ENCODE measurements at regions of chr19 and their contacts with region 1.

Region 1: DNA sequence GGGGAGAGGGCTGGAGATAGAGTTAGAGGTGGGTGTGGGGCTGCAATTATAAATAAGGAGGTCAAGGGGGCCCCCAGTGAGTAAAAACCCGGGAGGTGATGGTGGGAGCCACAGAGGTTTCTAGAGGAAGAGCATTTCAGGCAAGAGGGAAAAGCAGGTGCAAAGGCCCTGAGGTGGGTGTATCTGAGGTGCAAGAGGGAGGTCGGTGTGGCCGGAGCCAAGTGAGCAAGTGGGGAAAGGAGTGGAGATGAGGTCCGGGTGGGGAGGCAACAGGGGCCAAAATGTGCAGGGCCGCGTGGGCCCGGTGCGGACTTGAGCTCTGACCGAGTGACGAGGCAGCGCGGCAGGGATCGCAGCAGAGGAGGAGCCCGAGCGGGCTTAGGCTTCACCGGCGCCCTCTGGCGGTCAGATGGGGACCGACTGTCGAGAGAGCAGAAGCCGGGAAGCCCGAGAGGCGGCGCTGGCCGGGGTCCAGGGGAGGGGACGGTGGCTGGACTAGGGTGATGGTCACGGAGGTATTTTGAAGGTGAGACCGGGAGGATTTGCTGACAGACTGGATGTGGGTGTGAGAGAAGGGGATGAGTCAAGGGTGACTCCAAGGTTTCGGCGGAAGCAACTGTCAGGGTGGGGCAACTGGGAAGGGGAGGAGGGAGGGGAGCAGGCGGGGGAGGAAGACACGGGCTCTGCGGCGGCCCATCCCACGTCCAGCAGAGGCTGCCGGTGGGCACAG is 17.7 kb upstream of the SPACA4 start:
- DNase-seq: peak; percentile 87 to 96 (median 91)
- ATAC-seq: peak; percentile 64 to 90 (median 86)
- H3K4me3 ChIP-seq: peak overlapping the region in 11 of 12 donors; percentile 17 to 53 (median 42)
- H3K27ac ChIP-seq: peak overlapping the region in 3 of 12 donors; percentile 13 to 35 (median 17)
- H3K4me1 ChIP-seq: peaks cover 0 to 19% (median 4%) of the 10 kb centered on the region in 12 donors
- H3K27me3 ChIP-seq: no peaks in the 10 kb centered on the region
- CTCF ChIP-seq: peak; percentile 86 to 97 (median 92)
- POLR2A ChIP-seq: peak in 1 of 2 donors; percentile 20

Region 2: GRCh38 chr19:48271531-48272151 is 317.2 kb before region 1 on chr19:
- intact Hi-C with region 1: loop called in 6 of 10 experiments (anchors 1 to 10 kb)
- DNase-seq: peak; percentile 39 to 60 (median 49)
- ATAC-seq: peak; percentile 56 to 82 (median 77)
- H3K4me3 ChIP-seq: peak overlapping the region; percentile 39 to 73 (median 57)
- H3K27ac ChIP-seq: peak overlapping the region; percentile 25 to 81 (median 62)
- H3K4me1 ChIP-seq: peaks cover 0 to 16% (median 8%) of the 10 kb centered on the region in 12 donors
- H3K27me3 ChIP-seq: peaks cover 0 to 5% (median 0%) of the 10 kb centered on the region in 9 donors
- CTCF ChIP-seq: no peak
- POLR2A ChIP-seq: no peak

Region 3: GRCh38 chr19:48321622-48322591 is 266.9 kb before region 1 on chr19:
- intact Hi-C with region 1: loop called in 7 of 10 experiments (anchors 5 to 10 kb)
- DNase-seq: peak; percentile 99 to 100 (median 99)
- ATAC-seq: peak; percentile 89 to 93 (median 92)
- H3K4me3 ChIP-seq: peak overlapping the region; percentile 30 to 77 (median 60)
- H3K27ac ChIP-seq: peak overlapping the region; percentile 79 to 100 (median 98)
- H3K4me1 ChIP-seq: peaks cover 0 to 60% (median 33%) of the 10 kb centered on the region in 12 donors
- H3K27me3 ChIP-seq: no peaks in the 10 kb centered on the region
- CTCF ChIP-seq: peak in 8 of 12 donors; percentile 12 to 45 (median 20)
- POLR2A ChIP-seq: peak in 1 of 2 donors; percentile 86

Region 4: DNA sequence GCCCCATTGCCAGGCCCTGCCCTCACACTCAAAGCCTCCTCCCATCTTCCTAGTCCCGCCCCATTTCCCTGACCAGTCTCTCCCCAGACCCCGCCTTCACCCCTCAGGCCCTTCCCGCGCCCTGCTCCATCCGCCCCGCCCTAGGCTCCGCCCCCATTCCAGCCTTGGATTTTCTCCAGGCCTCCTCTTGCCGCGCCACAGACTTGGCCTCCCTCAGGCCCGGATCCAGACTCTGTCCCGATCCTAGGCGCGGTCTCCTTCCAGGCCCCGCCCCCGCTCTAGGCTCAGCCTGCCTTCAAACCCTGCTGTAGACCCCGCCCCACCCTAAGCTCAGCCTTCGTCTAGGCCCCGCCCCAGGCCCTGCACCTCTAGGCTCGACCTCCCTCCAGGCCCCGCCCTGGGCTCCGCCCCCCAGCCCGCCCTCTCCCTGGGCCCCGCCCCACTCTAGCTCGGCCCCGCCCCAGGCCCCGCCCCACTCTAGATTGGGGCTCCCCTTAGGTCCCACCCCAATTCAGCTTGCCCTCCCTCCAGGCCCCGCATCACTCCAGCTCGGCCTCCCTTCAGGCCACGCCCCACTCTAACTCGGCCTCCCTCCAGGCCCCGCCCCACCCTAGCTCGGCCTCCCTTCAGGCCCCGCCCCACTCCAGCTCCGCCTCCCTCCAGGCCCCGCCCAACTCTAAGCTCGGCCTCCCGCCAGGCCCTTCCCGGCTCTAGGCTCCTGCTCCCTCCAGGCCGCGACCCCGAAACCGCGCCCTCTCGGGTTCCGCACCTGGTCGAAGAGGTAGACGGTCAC is 95.7 kb before region 1 on chr19:
- intact Hi-C with region 1: loop called (anchors 1 to 5 kb)
- DNase-seq: peak; percentile 95 to 97 (median 97)
- ATAC-seq: peak; percentile 89 to 92 (median 90)
- H3K4me3 ChIP-seq: peak overlapping the region; percentile 23 to 78 (median 61)
- H3K27ac ChIP-seq: peak overlapping the region in 11 of 12 donors; percentile 29 to 77 (median 66)
- H3K4me1 ChIP-seq: peaks cover 0 to 39% (median 10%) of the 10 kb centered on the region in 12 donors
- H3K27me3 ChIP-seq: peaks cover 0 to 32% (median 1%) of the 10 kb centered on the region in 9 donors
- CTCF ChIP-seq: no peak
- POLR2A ChIP-seq: peak in 1 of 2 donors; percentile 63

Region 5: GRCh38 chr19:48568345-48568886 is 20.4 kb before region 1 on chr19:
- intact Hi-C with region 1: no loop called
- DNase-seq: peak; percentile 79 to 94 (median 88)
- ATAC-seq: peak; percentile 97 to 99 (median 99)
- H3K4me3 ChIP-seq: peak overlapping the region in 1 of 12 donors; percentile 15
- H3K27ac ChIP-seq: peak overlapping the region in 11 of 12 donors; percentile 52 to 75 (median 60)
- H3K4me1 ChIP-seq: peaks cover 0 to 15% (median 8%) of the 10 kb centered on the region in 12 donors
- H3K27me3 ChIP-seq: no peaks in the 10 kb centered on the region
- CTCF ChIP-seq: no peak
- POLR2A ChIP-seq: no peak

Region 6: DNA sequence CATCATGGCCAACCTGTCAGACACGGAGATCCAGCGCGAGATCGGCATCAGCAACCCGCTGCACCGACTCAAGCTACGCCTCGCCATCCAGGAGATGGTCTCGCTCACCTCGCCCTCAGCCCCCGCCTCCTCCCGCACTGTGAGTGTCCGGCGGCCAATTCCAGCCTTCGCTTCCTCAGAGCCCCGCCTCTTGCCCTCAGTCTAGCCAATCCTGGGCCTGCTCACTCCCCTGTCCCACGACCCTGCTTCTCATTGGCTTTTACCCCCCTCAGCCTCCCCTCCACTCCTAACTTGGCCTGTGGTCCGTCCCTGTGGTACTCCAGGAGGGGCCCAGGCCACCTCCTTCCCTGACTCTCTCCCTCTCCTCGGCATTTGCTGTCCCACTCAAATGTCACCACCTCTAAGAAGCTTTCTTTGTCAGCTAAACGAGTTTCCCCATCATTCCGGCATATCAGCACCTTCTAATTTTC is 554.1 kb after region 1 on chr19:
- intact Hi-C with region 1: no loop called
- DNase-seq: peak; percentile 93 to 96 (median 93)
- ATAC-seq: peak; percentile 97 to 98 (median 98)
- H3K4me3 ChIP-seq: peak overlapping the region in 11 of 12 donors; percentile 21 to 64 (median 57)
- H3K27ac ChIP-seq: peak overlapping the region in 3 of 12 donors; percentile 30 to 54 (median 47)
- H3K4me1 ChIP-seq: peaks cover 0 to 26% (median 15%) of the 10 kb centered on the region in 12 donors
- H3K27me3 ChIP-seq: no peaks in the 10 kb centered on the region
- CTCF ChIP-seq: no peak
- POLR2A ChIP-seq: peak in 1 of 2 donors; percentile 37

Measured in heart left ventricle (tissue), 16 donors.